ENCODE measurements at regions of chr6 and their contacts with region 1.

Region 1: DNA sequence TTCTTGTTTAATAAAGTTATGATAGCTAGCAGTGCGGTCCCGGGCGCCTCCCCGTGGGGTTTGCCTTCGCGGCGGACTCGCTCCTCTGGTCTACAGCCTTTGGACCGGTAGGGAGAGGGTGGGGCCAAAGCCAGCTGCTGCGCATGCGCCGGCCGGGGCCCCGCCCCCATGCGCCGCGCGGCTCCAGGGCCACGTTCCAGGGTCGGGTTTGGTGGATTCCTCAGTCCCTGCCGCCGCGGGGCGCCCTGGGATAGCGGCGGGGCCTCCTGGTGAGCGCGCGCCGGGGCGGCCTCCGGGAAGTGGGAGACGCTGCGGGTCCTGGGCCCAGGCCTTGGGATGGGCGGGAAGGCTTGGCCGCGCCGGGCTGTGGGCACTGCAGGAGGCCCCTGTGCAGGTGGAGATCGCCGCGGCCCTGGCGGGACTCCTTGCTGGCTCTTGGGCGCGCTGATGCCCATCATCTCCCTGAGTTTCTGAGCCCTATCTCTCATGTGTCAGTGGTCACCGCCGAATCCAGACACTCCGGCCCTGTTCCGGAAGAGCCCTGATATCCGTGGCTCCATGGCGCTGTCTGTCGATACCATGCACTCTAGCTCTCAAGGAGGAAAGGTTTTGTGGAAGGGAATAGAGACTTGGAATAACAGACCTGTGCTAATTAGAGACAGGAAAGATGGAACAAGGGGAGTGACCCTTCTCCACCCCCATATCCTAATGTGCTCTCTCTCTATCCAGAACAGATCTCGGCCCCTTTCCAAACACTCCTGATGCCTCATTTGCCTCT is at the start of gene VARS2:
- H3K4me3 ChIP-seq: peak within 1 kb of the TSS; percentile 45
- H3K27ac ChIP-seq: peak within 1 kb of the TSS; percentile 85
- H3K4me1 ChIP-seq: peaks cover 6% of the 10 kb centered on the region
- CTCF ChIP-seq: peak; percentile 70

Region 2: DNA sequence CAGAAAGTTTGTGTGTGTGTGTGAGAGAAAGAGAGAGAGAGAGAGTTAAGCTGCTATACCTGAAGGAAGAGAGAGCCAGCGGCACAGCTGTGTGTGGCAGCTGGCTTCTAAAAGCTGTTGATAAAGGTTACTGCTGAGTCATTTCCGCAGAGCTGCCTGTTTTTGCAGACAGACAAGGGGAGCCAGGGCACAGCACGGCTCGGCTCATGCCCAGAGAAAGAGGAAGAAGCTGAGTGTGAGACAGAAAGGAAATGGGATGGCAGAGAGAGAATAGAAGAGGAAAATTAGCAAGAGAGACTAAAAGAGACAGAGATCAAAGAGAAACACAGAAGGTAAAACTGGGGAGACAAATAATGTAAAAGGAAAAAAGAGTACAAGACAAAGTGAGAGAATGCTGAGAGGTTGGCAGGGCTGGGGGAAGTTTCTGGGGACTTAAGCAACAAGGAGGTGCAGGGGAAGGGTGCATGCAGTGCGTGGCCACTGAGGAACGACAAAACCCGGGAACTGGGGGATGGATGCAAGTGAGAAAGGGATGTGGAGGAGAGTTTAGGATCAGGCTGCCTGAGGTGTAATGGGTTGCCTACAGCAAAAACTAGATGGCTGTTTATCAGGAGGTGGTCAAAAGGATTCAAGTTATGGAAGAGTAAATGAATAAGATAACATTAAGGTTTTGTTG is 949.2 kb before region 1 on chr6:
- CTCF ChIA-PET with region 1: no interaction called
- POLR2A ChIA-PET with region 1: no interaction called
- H3K4me3 ChIP-seq: no peak overlapping the region; the same call in 1 of the 2 replicates
- H3K27ac ChIP-seq: peak overlapping the region; percentile 59; the same call in 1 of the 2 replicates
- H3K4me1 ChIP-seq: peaks cover 30% of the 10 kb centered on the region
- CTCF ChIP-seq: no peak

Region 3: GRCh38 chr6:30828027-30828960 is 86.0 kb before region 1 on chr6:
- CTCF ChIA-PET with region 1: interaction called, 102 read pairs
- POLR2A ChIA-PET with region 1: interaction called, 7 read pairs
- H3K4me3 ChIP-seq: no peak overlapping the region
- H3K27ac ChIP-seq: no peak overlapping the region
- H3K4me1 ChIP-seq: no peaks in the 10 kb centered on the region
- CTCF ChIP-seq: peak; percentile 79

Region 4: DNA sequence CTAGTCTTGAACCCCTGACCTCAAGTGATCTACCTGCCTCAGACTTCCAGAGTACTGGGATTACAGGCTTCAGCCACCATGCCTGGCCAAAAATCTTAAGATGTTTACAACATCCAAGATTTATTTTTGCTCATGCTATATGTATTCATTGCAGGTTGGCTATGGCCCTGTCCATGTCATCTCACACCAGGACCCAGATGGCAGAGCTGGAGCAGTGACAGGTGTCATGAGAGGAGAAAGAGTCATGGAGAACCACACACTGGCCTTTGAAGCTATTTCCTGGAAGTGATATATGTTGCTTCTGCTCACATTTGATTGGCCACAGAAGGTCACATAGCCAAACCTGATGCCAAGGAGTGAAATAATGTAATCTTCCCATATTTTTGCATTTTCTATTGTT is 43.7 kb before region 1 on chr6:
- CTCF ChIA-PET with region 1: no interaction called
- POLR2A ChIA-PET with region 1: no interaction called
- H3K4me3 ChIP-seq: no peak overlapping the region
- H3K27ac ChIP-seq: no peak overlapping the region
- H3K4me1 ChIP-seq: no peaks in the 10 kb centered on the region
- CTCF ChIP-seq: no peak

Region 5: GRCh38 chr6:30889921-30890645 is 24.2 kb before region 1 on chr6:
- CTCF ChIA-PET with region 1: interaction called, 13 read pairs
- POLR2A ChIA-PET with region 1: interaction called, 24 read pairs
- H3K4me3 ChIP-seq: no peak overlapping the region
- H3K27ac ChIP-seq: no peak overlapping the region
- H3K4me1 ChIP-seq: peaks cover 26% of the 10 kb centered on the region
- CTCF ChIP-seq: no peak

Region 6: GRCh38 chr6:31042806-31043205 is 128.5 kb after region 1 on chr6:
- CTCF ChIA-PET with region 1: interaction called, 18 read pairs
- POLR2A ChIA-PET with region 1: no interaction called
- H3K4me3 ChIP-seq: no peak overlapping the region
- H3K27ac ChIP-seq: no peak overlapping the region
- H3K4me1 ChIP-seq: no peaks in the 10 kb centered on the region
- CTCF ChIP-seq: no peak

Region 7: DNA sequence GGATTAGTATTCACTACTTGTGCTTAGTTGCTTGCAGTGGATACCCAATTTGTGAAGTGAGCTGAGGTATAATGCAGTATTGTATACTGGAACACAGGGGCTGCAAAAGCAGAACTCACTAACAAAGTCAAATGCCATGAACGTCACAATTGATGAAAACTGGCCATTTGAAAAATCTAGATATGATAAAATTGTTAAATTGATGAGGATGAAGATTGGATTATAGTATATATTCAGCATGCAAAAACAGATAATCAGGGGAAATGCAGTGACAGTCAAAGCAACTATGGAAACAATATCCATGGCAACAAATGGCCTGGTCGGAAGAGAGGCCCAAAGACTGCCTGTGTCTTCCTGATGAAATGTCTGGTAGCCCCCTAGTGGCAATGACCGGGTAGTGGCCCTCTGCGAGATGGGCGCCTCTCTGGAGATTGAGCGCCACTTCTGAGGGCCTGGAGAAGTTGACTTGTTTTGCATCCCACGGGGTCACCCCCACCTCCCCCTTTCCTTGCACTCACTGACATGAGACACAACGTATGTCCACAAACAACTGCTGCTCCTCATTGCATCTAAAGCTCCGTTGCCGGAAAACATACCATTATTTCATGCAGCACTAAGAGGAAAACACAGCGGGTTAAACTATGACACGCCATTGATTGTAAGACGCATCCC is 154.5 kb after region 1 on chr6:
- CTCF ChIA-PET with region 1: interaction called, 103 read pairs
- POLR2A ChIA-PET with region 1: interaction called, 5 read pairs
- H3K4me3 ChIP-seq: no peak overlapping the region
- H3K27ac ChIP-seq: no peak overlapping the region
- H3K4me1 ChIP-seq: peaks cover 17% of the 10 kb centered on the region
- CTCF ChIP-seq: peak; percentile 75

Measured in HEK293 (cell line).